Activated T-helper 2 cell treated with anti-CD3 and anti-CD28 coated beads, Interferon-gamma antibody, Interleukin-2, Interleukin-4, amounts not matched to agents 10 μg/mL and 5 μg/mL and 100 μg/mL, durations not matched to agents 14 hours and 24 hours and 36 hours (primary cell): ENCODE measurements at regions of chr2 and their contacts with region 1.

Region 1: GRCh38 chr2:46187112-46187618 is 110.0 kb upstream of the EPAS1 start:
- DNase-seq: peak; percentile 26
- H3K4me3 Mint-ChIP-seq: peak overlapping the region; percentile 50
- H3K27ac Mint-ChIP-seq: peak overlapping the region; percentile 87
- H3K4me1 Mint-ChIP-seq: peaks cover 17% of the 10 kb centered on the region
- H3K27me3 Mint-ChIP-seq: no peaks in the 10 kb centered on the region

Region 2: DNA sequence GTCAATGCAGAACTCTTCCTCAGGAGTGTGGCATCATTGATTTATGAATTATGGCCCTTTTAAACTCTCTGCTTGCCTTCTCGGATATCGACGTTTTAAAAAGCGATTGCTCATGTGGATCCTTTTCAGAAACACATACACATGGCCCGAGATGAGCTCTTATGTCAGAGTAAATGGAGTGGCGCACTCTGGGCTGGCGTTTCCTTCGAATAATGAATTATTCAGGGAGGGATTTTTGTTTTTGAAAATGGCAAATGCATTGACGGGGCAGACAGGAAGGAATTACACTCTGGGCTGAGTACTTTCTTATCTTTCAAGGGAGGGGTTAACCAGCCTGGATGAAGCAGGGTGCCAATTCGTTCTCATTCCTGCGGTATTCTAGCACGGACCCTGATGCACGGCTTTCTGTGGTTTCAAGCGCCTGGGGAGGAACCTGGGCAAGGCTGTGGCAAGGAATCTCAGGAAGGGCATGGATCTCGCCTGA is 393.0 kb before region 1 on chr2:
- intact Hi-C with region 1: loop called (anchors 10 kb)
- DNase-seq: no peak
- H3K4me3 Mint-ChIP-seq: no peak overlapping the region
- H3K27ac Mint-ChIP-seq: no peak overlapping the region
- H3K4me1 Mint-ChIP-seq: peaks cover 2% of the 10 kb centered on the region
- H3K27me3 Mint-ChIP-seq: peaks cover 3% of the 10 kb centered on the region

Region 3: GRCh38 chr2:46097714-46098480 is 89.3 kb before region 1 on chr2:
- intact Hi-C with region 1: loop called (anchors 10 kb)
- DNase-seq: no peak
- H3K4me3 Mint-ChIP-seq: no peak overlapping the region
- H3K27ac Mint-ChIP-seq: no peak overlapping the region
- H3K4me1 Mint-ChIP-seq: peaks cover 33% of the 10 kb centered on the region
- H3K27me3 Mint-ChIP-seq: no peaks in the 10 kb centered on the region

Region 4: GRCh38 chr2:46134531-46135181 is 52.5 kb before region 1 on chr2:
- intact Hi-C with region 1: no loop called
- DNase-seq: no peak
- H3K4me3 Mint-ChIP-seq: no peak overlapping the region
- H3K27ac Mint-ChIP-seq: no peak overlapping the region
- H3K4me1 Mint-ChIP-seq: no peaks in the 10 kb centered on the region
- H3K27me3 Mint-ChIP-seq: no peaks in the 10 kb centered on the region